Calu3 (cell line): ENCODE measurements at regions of chr19 and their contacts with region 1.

Region 1: GRCh38 chr19:11041966-11042627 is 47.2 kb upstream of the LDLR start:
- DNase-seq: peak; percentile 82
- H3K4me3 Mint-ChIP-seq: peak overlapping the region; percentile 8
- H3K27ac Mint-ChIP-seq: peak overlapping the region; percentile 79
- H3K4me1 Mint-ChIP-seq: peaks cover 21% of the 10 kb centered on the region
- H3K27me3 Mint-ChIP-seq: no peaks in the 10 kb centered on the region
- CTCF ChIP-seq: no peak

Region 2: GRCh38 chr19:10911579-10912363 is 130.3 kb before region 1 on chr19:
- CTCF ChIA-PET with region 1: no interaction called
- intact Hi-C with region 1: no loop called
- DNase-seq: no peak
- H3K4me3 Mint-ChIP-seq: no peak overlapping the region
- H3K27ac Mint-ChIP-seq: no peak overlapping the region
- H3K4me1 Mint-ChIP-seq: no peaks in the 10 kb centered on the region
- H3K27me3 Mint-ChIP-seq: no peaks in the 10 kb centered on the region
- CTCF ChIP-seq: no peak

Region 3: GRCh38 chr19:10968527-10969135 is 73.5 kb before region 1 on chr19:
- CTCF ChIA-PET with region 1: no interaction called
- intact Hi-C with region 1: no loop called
- DNase-seq: no peak
- H3K4me3 Mint-ChIP-seq: no peak overlapping the region
- H3K27ac Mint-ChIP-seq: no peak overlapping the region
- H3K4me1 Mint-ChIP-seq: peaks cover 5% of the 10 kb centered on the region
- H3K27me3 Mint-ChIP-seq: no peaks in the 10 kb centered on the region
- CTCF ChIP-seq: no peak

Region 4: DNA sequence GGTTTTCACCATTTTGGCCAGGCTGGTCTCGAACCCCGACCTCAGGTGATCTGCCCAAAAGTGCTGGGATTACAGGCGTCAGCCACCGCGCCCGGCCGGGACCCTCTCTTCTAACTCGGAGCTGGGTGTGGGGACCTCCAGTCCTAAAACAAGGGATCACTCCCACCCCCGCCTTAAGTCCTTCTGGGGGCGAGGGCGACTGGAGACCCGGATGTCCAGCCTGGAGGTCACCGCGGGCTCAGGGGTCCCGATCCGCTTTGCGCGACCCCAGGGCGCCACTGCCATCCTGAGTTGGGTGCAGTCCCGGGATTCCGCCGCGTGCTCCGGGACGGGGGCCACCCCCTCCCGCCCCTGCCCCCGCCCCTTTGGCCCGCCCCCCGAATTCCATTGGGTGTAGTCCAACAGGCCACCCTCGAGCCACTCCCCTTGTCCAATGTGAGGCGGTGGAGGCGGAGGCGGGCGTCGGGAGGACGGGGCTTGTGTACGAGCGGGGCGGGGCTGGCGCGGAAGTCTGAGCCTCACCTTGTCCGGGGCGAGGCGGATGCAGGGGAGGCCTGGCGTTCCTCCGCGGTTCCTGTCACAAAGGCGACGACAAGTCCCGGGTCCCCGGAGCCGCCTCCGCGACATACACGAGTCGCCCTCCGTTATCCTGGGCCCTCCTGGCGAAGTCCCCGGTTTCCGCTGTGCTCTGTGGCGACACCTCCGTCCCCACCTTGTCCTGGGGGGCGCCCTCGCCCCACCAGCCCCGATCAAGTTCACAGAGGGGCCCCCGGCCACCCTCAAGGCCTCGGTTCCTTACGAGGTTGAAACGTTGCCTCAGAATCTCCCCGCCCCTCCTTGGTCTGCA is 48.2 kb after region 1 on chr19:
- CTCF ChIA-PET with region 1: no interaction called
- intact Hi-C with region 1: loop called (anchors 2 kb)
- DNase-seq: peak; percentile 95
- H3K4me3 Mint-ChIP-seq: peak overlapping the region; percentile 84
- H3K27ac Mint-ChIP-seq: peak overlapping the region; percentile 91
- H3K4me1 Mint-ChIP-seq: no peaks in the 10 kb centered on the region
- H3K27me3 Mint-ChIP-seq: no peaks in the 10 kb centered on the region
- CTCF ChIP-seq: no peak